Panc1 (cell line): ENCODE measurements at regions of chr16 and their contacts with region 1.

Region 1: DNA sequence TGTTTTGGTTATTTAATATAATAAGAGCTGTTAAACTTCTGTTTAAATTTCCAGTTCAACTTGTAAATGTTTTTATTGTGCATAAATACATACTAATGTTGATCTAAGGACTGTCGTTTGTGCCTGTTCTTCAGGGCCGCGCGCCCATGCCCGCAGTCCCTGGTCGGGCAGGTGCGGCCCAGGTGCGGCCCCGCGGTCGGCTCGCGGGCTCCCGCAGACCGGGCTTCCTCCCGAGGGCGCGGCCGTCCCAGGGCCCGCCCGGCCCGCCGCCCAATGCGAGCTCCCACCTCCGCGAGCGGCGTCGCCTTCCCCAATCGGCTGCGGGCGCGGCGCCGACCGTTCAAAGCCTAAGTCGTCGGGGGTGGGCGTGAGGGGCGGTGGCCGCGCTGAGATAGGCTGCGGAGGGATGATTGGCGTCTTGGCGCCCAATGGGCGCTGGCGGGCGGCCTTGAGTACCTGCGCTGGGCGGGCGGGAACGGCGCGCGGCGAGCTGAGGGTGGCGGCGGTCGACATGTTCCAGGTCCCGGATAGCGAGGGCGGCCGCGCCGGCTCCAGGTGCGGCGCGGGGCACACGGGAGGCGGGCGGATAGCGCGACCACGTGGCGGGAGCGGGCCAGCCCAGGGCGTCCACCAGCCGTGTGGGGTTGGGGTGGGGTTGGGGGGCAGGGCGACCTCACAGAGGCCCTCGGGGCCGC is at the start of gene JPT2:
- DNase-seq: peak; percentile 86
- ATAC-seq: peak; percentile 96
- H3K4me3 ChIP-seq: peak within 1 kb of the TSS; percentile 72 to 92
- H3K27ac ChIP-seq: peak within 1 kb of the TSS; percentile 97
- H3K4me1 ChIP-seq: peaks cover 18% of the 10 kb centered on the region
- H3K27me3 ChIP-seq: no peaks in the 10 kb centered on the region
- CTCF ChIP-seq: no peak
- total RNA-seq, gene JPT2: 200 TPM

Region 2: GRCh38 chr16:1509307-1510221 is 168.4 kb before region 1 on chr16:
- CTCF ChIA-PET with region 1: no interaction called
- POLR2A ChIA-PET with region 1: no interaction called
- in situ Hi-C with region 1: no loop called
- intact Hi-C with region 1: no loop called
- DNase-seq: no peak
- ATAC-seq: no peak
- H3K4me3 ChIP-seq: no peak overlapping the region
- H3K27ac ChIP-seq: no peak overlapping the region
- H3K4me1 ChIP-seq: no peaks in the 10 kb centered on the region
- H3K27me3 ChIP-seq: no peaks in the 10 kb centered on the region
- CTCF ChIP-seq: no peak

Region 3: GRCh38 chr16:1519831-1520230 is 158.1 kb before region 1 on chr16:
- CTCF ChIA-PET with region 1: no interaction called
- POLR2A ChIA-PET with region 1: no interaction called
- in situ Hi-C with region 1: no loop called
- intact Hi-C with region 1: no loop called
- DNase-seq: no peak
- ATAC-seq: no peak
- H3K4me3 ChIP-seq: no peak overlapping the region
- H3K27ac ChIP-seq: no peak overlapping the region
- H3K4me1 ChIP-seq: no peaks in the 10 kb centered on the region
- H3K27me3 ChIP-seq: no peaks in the 10 kb centered on the region
- CTCF ChIP-seq: no peak

Region 4: DNA sequence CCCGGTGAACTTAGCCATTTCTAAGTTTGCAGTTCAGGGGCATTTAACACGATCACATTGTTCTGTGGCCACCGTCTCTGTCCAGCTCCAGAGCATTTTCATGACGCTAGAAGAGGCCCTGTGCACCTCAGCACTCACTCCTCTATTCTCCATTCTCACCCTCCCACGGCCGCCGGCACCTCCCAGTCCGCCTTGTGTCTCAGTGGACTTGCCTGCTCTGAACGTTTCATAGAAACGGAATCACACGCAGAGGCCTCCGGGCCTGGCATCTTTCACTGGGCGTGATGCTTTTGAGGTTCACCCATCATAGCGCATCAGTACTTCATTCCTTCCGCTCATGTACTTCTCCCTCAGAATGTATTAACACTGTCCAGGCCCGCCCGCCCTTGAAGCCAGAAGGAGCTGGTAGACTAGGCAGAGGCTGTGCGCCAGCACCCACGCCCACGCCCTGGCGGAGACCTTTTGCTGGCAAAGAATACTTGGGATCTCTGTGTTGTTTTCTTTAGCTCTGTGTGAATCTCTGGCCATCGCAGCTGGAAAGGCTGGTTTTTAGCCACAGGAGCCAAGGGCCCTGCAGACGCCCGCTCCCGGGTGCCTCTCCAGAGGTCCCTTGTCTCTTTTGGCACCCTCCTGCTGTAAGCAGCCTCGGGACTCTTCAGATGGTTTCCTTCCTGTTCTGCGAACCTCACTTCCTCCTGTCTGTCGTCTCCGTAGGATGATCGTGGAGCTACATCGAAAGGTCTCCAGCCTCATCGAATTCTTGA is 23.3 kb before region 1 on chr16:
- CTCF ChIA-PET with region 1: no interaction called
- POLR2A ChIA-PET with region 1: interaction called, 12 read pairs
- in situ Hi-C with region 1: no loop called
- intact Hi-C with region 1: no loop called
- DNase-seq: no peak
- ATAC-seq: no peak
- H3K4me3 ChIP-seq: no peak overlapping the region
- H3K27ac ChIP-seq: no peak overlapping the region
- H3K4me1 ChIP-seq: no peaks in the 10 kb centered on the region
- H3K27me3 ChIP-seq: no peaks in the 10 kb centered on the region
- CTCF ChIP-seq: no peak